Sigmoid colon (tissue), 7 donors: ENCODE measurements at regions of chr17 and their contacts with region 1.

Region 1: DNA sequence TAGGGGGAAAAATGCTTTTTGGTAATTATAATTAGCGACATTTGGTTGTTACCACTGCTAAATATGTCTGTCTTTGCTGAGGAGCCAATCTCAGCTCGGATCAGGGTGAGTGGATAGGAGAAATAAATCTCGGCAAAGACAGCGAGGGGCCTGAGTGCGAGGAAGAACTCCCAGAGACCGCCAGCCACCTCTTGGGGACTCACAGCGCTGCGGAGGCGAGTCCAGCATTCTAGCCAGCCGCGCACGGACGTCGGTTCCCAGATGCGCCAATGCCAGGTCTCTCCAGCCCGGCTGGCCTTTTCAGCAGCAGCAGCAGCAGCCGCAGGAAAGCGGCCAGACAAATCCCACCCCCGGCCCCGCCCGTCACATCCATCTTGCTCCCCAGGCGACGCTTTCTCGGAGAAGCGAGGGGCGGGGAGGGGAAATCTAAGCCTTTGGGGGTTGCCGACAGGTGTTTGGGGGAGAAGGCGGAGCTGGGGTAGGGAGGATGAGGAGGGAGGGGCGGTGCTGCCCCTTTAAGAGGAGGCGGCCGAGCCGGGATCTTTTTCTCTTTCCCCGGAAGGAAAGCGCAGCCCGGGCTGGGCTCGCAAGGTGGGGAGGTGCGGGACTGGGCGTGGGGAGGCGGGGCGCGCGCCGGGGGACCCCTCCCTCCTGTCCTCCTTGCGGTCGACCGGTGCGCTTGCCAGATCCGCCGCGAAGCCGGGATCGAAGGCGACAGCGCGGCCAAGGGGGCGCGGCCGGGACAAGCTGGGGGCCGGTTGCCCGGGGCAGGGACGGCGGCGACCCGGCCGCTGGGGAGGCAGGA is at the start of gene ITGA3:
- DNase-seq: peak; percentile 94
- H3K4me3 ChIP-seq: peak within 1 kb of the TSS; percentile 63 to 89 (median 80)
- H3K27ac ChIP-seq: peak within 1 kb of the TSS; percentile 91 to 96 (median 94)
- H3K4me1 ChIP-seq: peaks cover 0 to 64% (median 52%) of the 10 kb centered on the region in 4 donors
- H3K27me3 ChIP-seq: no peaks in the 10 kb centered on the region
- CTCF ChIP-seq: no peak
- EP300 ChIP-seq: no peak
- POLR2A ChIP-seq: peak in 1 of 2 donors; percentile 25
- total RNA-seq, gene ITGA3: 19.9 to 54.0 (median 39.5) TPM

Region 2: DNA sequence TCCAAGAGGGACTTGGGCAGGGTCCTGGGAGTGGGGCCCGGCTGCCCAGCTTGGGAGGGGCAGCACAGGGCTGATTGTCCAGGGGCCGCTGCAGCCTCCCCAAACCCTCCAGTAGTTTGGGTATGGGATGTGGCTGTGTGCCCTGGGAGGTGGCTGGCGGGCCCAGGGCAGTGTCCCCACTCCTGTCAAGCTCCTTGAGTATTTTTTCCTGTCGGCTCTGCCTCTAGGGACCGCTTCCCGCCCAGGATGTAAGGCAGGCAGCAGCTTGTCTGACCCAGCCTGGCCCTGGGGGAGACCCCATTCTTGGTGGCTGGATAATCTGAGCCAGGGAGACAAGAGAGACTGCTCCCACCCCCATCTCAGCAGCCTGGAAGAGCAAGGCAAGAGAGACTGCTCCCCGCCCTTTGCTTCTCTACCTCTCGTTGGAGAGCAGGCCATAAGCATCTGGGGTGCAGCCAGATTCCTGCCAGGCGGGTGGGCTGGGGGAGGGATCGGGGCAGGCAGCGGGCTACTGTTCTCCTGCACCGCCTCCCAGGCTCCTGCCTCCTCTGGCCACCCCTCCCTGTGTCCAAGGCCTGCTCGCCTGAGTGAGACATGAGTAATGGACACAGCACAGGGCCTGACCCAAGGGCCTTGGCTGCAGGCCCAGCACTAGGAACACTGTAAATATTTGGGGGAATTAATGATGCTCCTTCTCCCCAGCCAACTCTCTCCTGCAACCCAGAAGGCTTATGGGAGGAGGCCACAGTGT is 18.1 kb before region 1 on chr17:
- intact Hi-C with region 1: loop called (anchors 2 kb)
- DNase-seq: peak; percentile 92
- H3K4me3 ChIP-seq: no peak overlapping the region
- H3K27ac ChIP-seq: peak overlapping the region; percentile 53 to 84 (median 80)
- H3K4me1 ChIP-seq: peaks cover 0 to 59% (median 48%) of the 10 kb centered on the region in 4 donors
- H3K27me3 ChIP-seq: no peaks in the 10 kb centered on the region
- CTCF ChIP-seq: no peak
- EP300 ChIP-seq: no peak
- POLR2A ChIP-seq: no peak